Activated CD8-positive, alpha-beta memory T cell treated with anti-CD3 and anti-CD28 coated beads, Interleukin-2, amount 10 ng/mL, durations not matched to agents 7 days and 5 days (primary cell): ENCODE measurements at regions of chr1 and their contacts with region 1.

Region 1: DNA sequence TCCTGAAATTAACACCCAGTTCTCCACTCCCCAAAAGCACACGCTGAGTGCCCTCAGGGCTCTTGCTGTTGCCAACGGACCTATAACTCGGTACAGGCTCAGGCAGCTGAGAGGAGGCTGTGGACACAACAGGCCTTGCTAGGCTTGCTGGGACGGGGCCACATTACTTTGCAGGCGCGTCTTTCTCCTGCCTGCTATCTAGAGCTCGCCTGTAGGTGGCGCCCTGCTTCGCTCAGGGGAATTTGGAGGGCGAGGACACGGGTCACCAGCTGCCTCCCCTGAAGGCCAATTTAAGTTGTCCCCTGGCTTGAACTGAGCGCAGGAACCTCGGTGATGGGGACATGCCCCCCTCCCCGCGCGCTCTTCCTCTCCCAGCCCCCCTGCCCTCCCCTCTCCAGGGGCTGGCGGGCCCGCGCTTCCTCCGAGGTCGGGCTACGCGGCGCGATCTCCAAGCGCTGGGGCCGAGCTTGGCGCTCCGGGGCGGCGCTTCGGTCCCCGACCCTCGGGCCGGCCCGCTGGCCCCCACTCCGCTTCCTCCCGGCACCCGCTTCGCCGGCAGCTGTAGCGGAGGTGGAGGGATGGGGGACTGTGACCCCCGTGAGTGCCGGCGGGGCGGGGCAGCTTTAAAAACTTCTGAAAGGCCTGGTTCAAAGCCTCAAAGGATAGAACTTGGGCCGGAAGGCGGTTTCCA is 32.4 kb upstream of the NFIA start:
- DNase-seq: peak; percentile 92
- ATAC-seq: peak; percentile 81
- H3K4me3 Mint-ChIP-seq: peak overlapping the region; percentile 53
- H3K27ac Mint-ChIP-seq: no peak overlapping the region
- H3K4me1 Mint-ChIP-seq: peaks cover 32% of the 10 kb centered on the region
- H3K27me3 Mint-ChIP-seq: peaks cover 41% of the 10 kb centered on the region

Region 2: DNA sequence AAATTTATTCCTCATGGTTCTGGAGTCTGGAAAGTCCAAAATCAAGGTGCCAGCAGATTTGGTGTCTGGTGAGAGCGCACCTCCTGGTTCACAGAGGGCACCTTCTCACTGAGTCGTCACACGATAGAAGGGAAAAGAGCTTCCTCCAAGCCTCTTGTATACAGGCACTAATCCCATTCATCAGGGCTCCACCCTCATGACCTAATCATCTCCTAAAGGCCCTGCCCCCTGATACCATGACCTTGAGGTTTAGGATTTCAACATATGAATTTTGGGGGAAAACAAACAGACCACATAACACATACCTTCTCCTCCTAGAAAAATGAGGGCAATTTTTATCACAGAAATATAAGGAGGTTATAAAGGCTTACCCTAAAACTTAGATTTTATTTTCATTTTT is 55.6 kb before region 1 on chr1:
- CTCF ChIA-PET with region 1: no interaction called
- DNase-seq: no peak
- ATAC-seq: no peak
- H3K4me3 Mint-ChIP-seq: no peak overlapping the region
- H3K27ac Mint-ChIP-seq: no peak overlapping the region
- H3K4me1 Mint-ChIP-seq: peaks cover 3% of the 10 kb centered on the region
- H3K27me3 Mint-ChIP-seq: peaks cover 28% of the 10 kb centered on the region

Region 3: GRCh38 chr1:61013946-61014667 is 35.9 kb before region 1 on chr1:
- CTCF ChIA-PET with region 1: interaction called, 11 read pairs
- DNase-seq: no peak
- ATAC-seq: no peak
- H3K4me3 Mint-ChIP-seq: no peak overlapping the region
- H3K27ac Mint-ChIP-seq: no peak overlapping the region
- H3K4me1 Mint-ChIP-seq: peaks cover 13% of the 10 kb centered on the region
- H3K27me3 Mint-ChIP-seq: peaks cover 29% of the 10 kb centered on the region

Region 4: GRCh38 chr1:61077676-61078541 is 27.9 kb after region 1 on chr1:
- CTCF ChIA-PET with region 1: interaction called, 43 read pairs
- DNase-seq: peak; percentile 96
- ATAC-seq: peak; percentile 80
- H3K4me3 Mint-ChIP-seq: peak overlapping the region; percentile 83
- H3K27ac Mint-ChIP-seq: peak overlapping the region; percentile 96
- H3K4me1 Mint-ChIP-seq: peaks cover 41% of the 10 kb centered on the region
- H3K27me3 Mint-ChIP-seq: peaks cover 26% of the 10 kb centered on the region

Region 5: DNA sequence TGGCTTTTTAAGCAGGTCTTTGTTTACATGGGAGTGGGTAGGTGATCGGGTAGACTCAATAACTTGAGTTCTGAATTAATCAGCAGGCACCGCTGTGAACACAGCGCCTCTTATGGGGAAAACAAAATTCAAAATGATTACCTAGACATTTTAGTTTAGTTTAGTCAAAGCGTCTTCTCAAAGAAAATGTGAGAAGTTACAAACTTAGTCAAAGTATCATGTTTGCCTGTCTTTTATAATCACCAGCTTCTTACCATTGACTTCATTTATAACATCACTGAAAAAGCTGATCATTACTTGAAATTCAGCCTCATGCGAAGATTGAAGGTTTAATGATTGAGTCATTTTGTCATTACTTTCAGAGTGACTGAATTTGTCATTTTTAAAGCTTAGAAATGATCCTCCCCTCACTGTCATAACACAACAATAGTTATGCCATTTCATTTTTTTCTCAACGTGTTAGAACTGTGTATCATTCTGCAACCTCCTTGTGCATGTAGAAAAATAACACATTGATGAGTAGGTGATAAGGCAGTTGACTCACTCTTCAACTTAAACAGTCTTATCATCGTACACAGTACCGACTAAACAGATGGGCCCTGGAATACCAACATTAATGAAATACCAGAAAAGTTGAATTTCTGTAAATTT is 220.9 kb after region 1 on chr1:
- CTCF ChIA-PET with region 1: interaction called, 26 read pairs
- DNase-seq: peak; percentile 45
- ATAC-seq: peak; percentile 84
- H3K4me3 Mint-ChIP-seq: no peak overlapping the region
- H3K27ac Mint-ChIP-seq: peak overlapping the region; percentile 82
- H3K4me1 Mint-ChIP-seq: peaks cover 46% of the 10 kb centered on the region
- H3K27me3 Mint-ChIP-seq: no peaks in the 10 kb centered on the region

Region 6: DNA sequence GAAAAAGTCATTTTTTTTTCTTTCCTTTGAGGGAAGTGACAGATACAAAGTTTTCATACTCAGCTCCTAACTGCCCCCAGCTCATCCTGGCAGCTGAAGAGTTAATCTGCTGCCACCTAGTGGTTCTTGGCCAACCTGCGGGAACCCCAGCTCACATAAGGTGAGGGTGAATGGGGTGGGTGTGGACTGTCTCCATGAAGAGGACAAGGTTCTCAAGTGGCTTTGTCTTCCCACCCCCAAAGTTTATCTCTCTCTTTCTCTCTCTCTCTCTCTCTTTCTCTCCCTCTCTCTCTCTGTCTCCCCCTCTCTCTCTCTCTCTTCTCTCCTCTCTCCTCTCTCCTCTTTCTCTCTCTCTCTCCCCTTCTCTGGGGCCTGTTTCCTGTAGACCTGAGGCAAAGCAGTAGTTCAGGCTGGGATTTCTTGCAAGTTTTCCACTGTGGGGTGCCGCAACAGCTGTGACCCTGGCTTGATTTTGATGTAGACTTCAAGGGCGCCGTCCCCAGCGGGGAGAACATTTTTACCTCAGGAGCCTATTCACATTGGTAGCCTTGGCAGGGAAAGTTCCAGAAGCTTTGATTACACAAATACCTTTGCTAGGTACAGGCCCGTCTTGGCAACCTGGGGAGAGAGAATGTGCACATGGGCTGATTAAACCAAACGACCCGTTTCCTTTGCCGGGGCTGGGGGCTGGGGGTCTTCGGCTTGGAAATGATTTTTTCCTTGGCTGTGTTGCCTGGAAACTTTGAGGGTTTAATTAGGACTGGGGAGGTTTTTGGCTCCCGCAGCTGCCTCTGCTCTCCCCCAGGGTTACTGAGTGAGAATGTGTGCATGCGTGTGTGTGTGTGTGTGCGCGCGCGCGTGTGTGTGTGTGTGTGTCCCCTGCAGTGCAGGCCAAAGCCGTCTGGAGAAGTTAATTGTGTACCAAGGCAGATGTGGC is 539.0 kb after region 1 on chr1:
- CTCF ChIA-PET with region 1: interaction called, 25 read pairs
- DNase-seq: peak; percentile 78
- ATAC-seq: peak; percentile 97
- H3K4me3 Mint-ChIP-seq: no peak overlapping the region
- H3K27ac Mint-ChIP-seq: no peak overlapping the region
- H3K4me1 Mint-ChIP-seq: no peaks in the 10 kb centered on the region
- H3K27me3 Mint-ChIP-seq: peaks cover 29% of the 10 kb centered on the region